GM12878 (cell line): ENCODE measurements at regions of chr3 and their contacts with region 1.

Region 1: DNA sequence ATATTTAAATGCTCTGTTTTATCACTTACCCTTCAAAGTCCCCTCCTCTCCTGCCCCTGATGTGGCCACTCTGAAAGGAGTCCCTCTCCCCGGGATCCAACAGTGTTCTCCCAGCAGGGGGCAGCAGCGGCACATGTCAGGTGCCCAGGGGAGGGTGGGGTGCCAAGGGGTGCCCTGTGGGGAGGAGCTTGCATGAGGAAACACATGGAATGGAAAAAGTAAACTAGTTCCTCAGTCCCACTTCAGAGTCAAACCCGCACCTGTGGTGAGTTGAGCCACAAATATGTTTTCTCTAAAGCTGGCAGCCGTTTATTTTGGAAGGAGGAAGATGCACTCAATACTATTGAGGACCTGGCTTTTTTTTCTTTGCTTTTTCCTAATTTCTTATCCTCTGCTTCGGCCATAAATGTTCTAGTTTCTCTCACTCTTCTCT is 30.1 kb upstream of the NRROS start:
- DNase-seq: peak; percentile 68
- ATAC-seq: peak; percentile 100
- H3K4me3 ChIP-seq: no peak overlapping the region
- H3K27ac ChIP-seq: peak overlapping the region; percentile 30; the same call in 1 of the 2 replicates
- H3K4me1 ChIP-seq: peaks cover 4% of the 10 kb centered on the region; the same call in 1 of the 2 replicates
- H3K27me3 ChIP-seq: no peaks in the 10 kb centered on the region
- CTCF ChIP-seq: peak; percentile 83 to 95 (median 92)
- EP300 ChIP-seq: no peak
- POLR2A ChIP-seq: no peak
- RAD21 ChIP-seq: peak; percentile 100

Region 2: GRCh38 chr3:195697582-195698301 is 911.6 kb before region 1 on chr3:
- CTCF ChIA-PET with region 1: no interaction called
- POLR2A ChIA-PET with region 1: no interaction called
- RAD21 ChIA-PET with region 1: no interaction called
- SMC1A ChIA-PET with region 1: no interaction called
- in situ Hi-C with region 1: no loop called
- intact Hi-C with region 1: no loop called
- DNase-seq: no peak
- ATAC-seq: no peak
- H3K4me3 ChIP-seq: no peak overlapping the region
- H3K27ac ChIP-seq: no peak overlapping the region
- H3K4me1 ChIP-seq: no peaks in the 10 kb centered on the region
- H3K27me3 ChIP-seq: no peaks in the 10 kb centered on the region
- CTCF ChIP-seq: no peak
- EP300 ChIP-seq: no peak
- POLR2A ChIP-seq: no peak
- RAD21 ChIP-seq: no peak

Region 3: GRCh38 chr3:196136026-196136984 is 473.1 kb before region 1 on chr3:
- CTCF ChIA-PET with region 1: no interaction called
- POLR2A ChIA-PET with region 1: no interaction called
- RAD21 ChIA-PET with region 1: no interaction called
- SMC1A ChIA-PET with region 1: no interaction called
- in situ Hi-C with region 1: no loop called
- intact Hi-C with region 1: no loop called
- DNase-seq: no peak
- ATAC-seq: peak; percentile 23; the same call in 1 of the 3 replicates
- H3K4me3 ChIP-seq: no peak overlapping the region
- H3K27ac ChIP-seq: no peak overlapping the region
- H3K4me1 ChIP-seq: peaks cover 13% of the 10 kb centered on the region
- H3K27me3 ChIP-seq: no peaks in the 10 kb centered on the region
- CTCF ChIP-seq: no peak
- EP300 ChIP-seq: no peak
- POLR2A ChIP-seq: no peak
- RAD21 ChIP-seq: no peak

Region 4: DNA sequence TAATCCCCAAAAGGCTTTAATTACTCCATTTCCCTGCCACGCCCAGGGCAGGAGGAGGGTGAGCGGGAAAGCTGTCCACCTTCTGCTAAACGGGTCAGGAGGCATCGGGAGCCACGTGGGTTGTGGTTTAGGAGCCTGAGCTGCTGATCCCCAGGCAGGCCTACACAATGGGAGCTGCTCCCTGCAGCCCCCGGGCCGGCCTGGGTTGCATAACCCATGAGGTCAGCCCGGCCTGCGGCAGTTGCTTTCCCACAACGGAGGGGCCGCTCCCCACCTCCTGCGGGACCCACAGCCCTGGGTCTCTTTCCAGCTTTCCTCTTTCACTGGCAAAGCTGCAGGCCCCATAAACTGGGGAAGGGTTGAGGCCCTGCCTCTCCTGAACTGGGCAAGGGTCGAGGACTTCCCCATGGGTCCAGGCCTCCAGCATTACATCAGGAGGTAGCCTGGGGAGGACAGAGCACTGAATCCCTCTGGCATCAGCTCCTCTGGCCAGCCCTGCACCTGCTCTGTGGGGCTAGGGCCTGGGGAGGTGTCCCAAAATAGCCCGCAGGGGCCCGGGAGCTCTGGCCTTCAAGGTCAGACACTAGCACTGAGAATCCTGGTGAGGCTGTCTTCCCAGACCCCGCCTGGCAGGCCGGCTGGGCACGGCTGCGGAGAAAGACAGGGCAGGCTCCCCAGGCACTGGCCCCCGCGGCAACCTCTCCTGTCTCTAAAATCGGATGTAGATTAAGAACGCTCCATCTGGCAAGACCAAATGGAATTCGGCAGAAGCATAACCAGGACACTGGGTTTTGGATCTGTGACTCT is 445.5 kb before region 1 on chr3:
- CTCF ChIA-PET with region 1: no interaction called
- POLR2A ChIA-PET with region 1: no interaction called
- RAD21 ChIA-PET with region 1: no interaction called
- SMC1A ChIA-PET with region 1: no interaction called
- in situ Hi-C with region 1: no loop called
- intact Hi-C with region 1: no loop called
- DNase-seq: no peak
- ATAC-seq: no peak
- H3K4me3 ChIP-seq: no peak overlapping the region
- H3K27ac ChIP-seq: no peak overlapping the region
- H3K4me1 ChIP-seq: peaks cover 12% of the 10 kb centered on the region
- H3K27me3 ChIP-seq: no peaks in the 10 kb centered on the region
- CTCF ChIP-seq: no peak
- EP300 ChIP-seq: no peak
- POLR2A ChIP-seq: no peak
- RAD21 ChIP-seq: no peak

Region 5: GRCh38 chr3:196632046-196632751 is 22.8 kb after region 1 on chr3:
- CTCF ChIA-PET with region 1: interaction called, 17 read pairs
- POLR2A ChIA-PET with region 1: no interaction called
- RAD21 ChIA-PET with region 1: interaction called, 31 read pairs
- SMC1A ChIA-PET with region 1: interaction called, 20 read pairs
- in situ Hi-C with region 1: no loop called
- intact Hi-C with region 1: loop called (anchors 2 kb)
- DNase-seq: peak; percentile 69
- ATAC-seq: peak; percentile 84
- H3K4me3 ChIP-seq: peak overlapping the region; percentile 72
- H3K27ac ChIP-seq: peak overlapping the region; percentile 98
- H3K4me1 ChIP-seq: peaks cover 38% of the 10 kb centered on the region
- H3K27me3 ChIP-seq: no peaks in the 10 kb centered on the region
- CTCF ChIP-seq: peak; percentile 8 to 54 (median 49); a peak in 4 of 6 replicates
- EP300 ChIP-seq: no peak
- POLR2A ChIP-seq: peak; percentile 80
- RAD21 ChIP-seq: peak; percentile 54

Region 6: DNA sequence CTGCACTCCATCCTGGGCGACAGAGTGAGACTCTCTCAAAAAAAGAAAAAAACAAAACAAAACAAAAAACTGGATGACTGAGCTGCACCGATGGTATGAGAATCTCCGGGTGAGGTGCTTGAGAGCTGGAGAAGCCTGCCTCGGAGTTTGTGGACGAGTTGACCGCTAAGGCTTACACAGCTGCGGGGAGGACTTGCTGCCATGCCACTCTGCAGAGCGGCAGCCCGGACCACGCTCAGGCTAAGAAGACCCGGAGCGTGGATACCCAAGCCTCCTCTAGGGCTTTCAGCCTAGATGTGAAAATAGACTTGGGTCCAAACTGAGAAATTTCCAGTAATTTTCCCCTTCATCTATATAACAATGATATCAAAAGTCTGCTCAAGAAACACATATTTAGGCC is 46.1 kb after region 1 on chr3:
- CTCF ChIA-PET with region 1: interaction called, 6 read pairs
- POLR2A ChIA-PET with region 1: interaction called, 3 read pairs
- RAD21 ChIA-PET with region 1: interaction called, 5 read pairs
- SMC1A ChIA-PET with region 1: interaction called, 10 read pairs
- in situ Hi-C with region 1: no loop called
- intact Hi-C with region 1: no loop called
- DNase-seq: no peak
- ATAC-seq: no peak
- H3K4me3 ChIP-seq: no peak overlapping the region
- H3K27ac ChIP-seq: no peak overlapping the region
- H3K4me1 ChIP-seq: no peaks in the 10 kb centered on the region; the same call in 1 of the 2 replicates
- H3K27me3 ChIP-seq: no peaks in the 10 kb centered on the region
- CTCF ChIP-seq: no peak
- EP300 ChIP-seq: no peak
- POLR2A ChIP-seq: no peak
- RAD21 ChIP-seq: no peak

Region 7: GRCh38 chr3:196684548-196685407 is 75.4 kb after region 1 on chr3:
- CTCF ChIA-PET with region 1: interaction called, 144 read pairs
- POLR2A ChIA-PET with region 1: interaction called, 10 read pairs
- RAD21 ChIA-PET with region 1: interaction called, 50 read pairs
- SMC1A ChIA-PET with region 1: interaction called, 72 read pairs
- in situ Hi-C with region 1: loop called (anchors 5 kb)
- intact Hi-C with region 1: loop called (anchors 1 kb)
- DNase-seq: peak; percentile 83
- ATAC-seq: peak; percentile 98
- H3K4me3 ChIP-seq: no peak overlapping the region
- H3K27ac ChIP-seq: no peak overlapping the region
- H3K4me1 ChIP-seq: no peaks in the 10 kb centered on the region; the same call in 1 of the 2 replicates
- H3K27me3 ChIP-seq: no peaks in the 10 kb centered on the region
- CTCF ChIP-seq: peak; percentile 69 to 86 (median 83)
- EP300 ChIP-seq: 0 out of 4 replicates have a peak, but pooled peaks have one; percentile 23 to 53
- POLR2A ChIP-seq: no peak
- RAD21 ChIP-seq: peak; percentile 87

Region 8: GRCh38 chr3:196694941-196695848 is 85.8 kb after region 1 on chr3:
- CTCF ChIA-PET with region 1: interaction called, 11 read pairs
- POLR2A ChIA-PET with region 1: interaction called, 3 read pairs
- RAD21 ChIA-PET with region 1: interaction called, 3 read pairs
- SMC1A ChIA-PET with region 1: interaction called, 7 read pairs
- in situ Hi-C with region 1: no loop called
- intact Hi-C with region 1: no loop called
- DNase-seq: no peak
- ATAC-seq: no peak
- H3K4me3 ChIP-seq: no peak overlapping the region
- H3K27ac ChIP-seq: no peak overlapping the region
- H3K4me1 ChIP-seq: no peaks in the 10 kb centered on the region
- H3K27me3 ChIP-seq: no peaks in the 10 kb centered on the region
- CTCF ChIP-seq: no peak
- EP300 ChIP-seq: no peak
- POLR2A ChIP-seq: no peak
- RAD21 ChIP-seq: no peak

Region 9: GRCh38 chr3:196837819-196838420 is 228.6 kb after region 1 on chr3:
- CTCF ChIA-PET with region 1: interaction called, 15 read pairs
- POLR2A ChIA-PET with region 1: no interaction called
- RAD21 ChIA-PET with region 1: interaction called, 5 read pairs
- SMC1A ChIA-PET with region 1: interaction called, 6 read pairs
- in situ Hi-C with region 1: no loop called
- intact Hi-C with region 1: loop called (anchors 5 kb)
- DNase-seq: peak; percentile 20
- ATAC-seq: peak; percentile 96
- H3K4me3 ChIP-seq: no peak overlapping the region
- H3K27ac ChIP-seq: no peak overlapping the region
- H3K4me1 ChIP-seq: no peaks in the 10 kb centered on the region
- H3K27me3 ChIP-seq: no peaks in the 10 kb centered on the region
- CTCF ChIP-seq: peak; percentile 89 to 97 (median 94)
- EP300 ChIP-seq: no peak
- POLR2A ChIP-seq: no peak
- RAD21 ChIP-seq: peak; percentile 96

Region 10: GRCh38 chr3:196969660-196970546 is 360.5 kb after region 1 on chr3:
- CTCF ChIA-PET with region 1: interaction called, 4 read pairs
- POLR2A ChIA-PET with region 1: no interaction called
- RAD21 ChIA-PET with region 1: interaction called, 7 read pairs
- SMC1A ChIA-PET with region 1: interaction called, 3 read pairs
- in situ Hi-C with region 1: no loop called
- intact Hi-C with region 1: loop called (anchors 1 kb)
- DNase-seq: no peak
- ATAC-seq: peak; percentile 85
- H3K4me3 ChIP-seq: peak overlapping the region; percentile 90
- H3K27ac ChIP-seq: peak overlapping the region; percentile 18; the same call in 1 of the 2 replicates
- H3K4me1 ChIP-seq: peaks cover 3% of the 10 kb centered on the region
- H3K27me3 ChIP-seq: no peaks in the 10 kb centered on the region; a peak in 1 of 4 replicates
- CTCF ChIP-seq: peak; percentile 61 to 82 (median 69); a peak in 5 of 6 replicates
- EP300 ChIP-seq: no peak
- POLR2A ChIP-seq: peak; percentile 45; the same call in 1 of the 2 replicates
- RAD21 ChIP-seq: peak; percentile 70